Panc1 (cell line): ENCODE measurements at regions of chr2 and their contacts with region 1.

Region 1: GRCh38 chr2:234368861-234369261 is 128.0 kb downstream of the ARL4C start:
- DNase-seq: peak; percentile 77
- ATAC-seq: peak; percentile 97
- H3K4me3 ChIP-seq: no peak overlapping the region
- H3K27ac ChIP-seq: peak overlapping the region; percentile 100
- H3K4me1 ChIP-seq: peaks cover 87% of the 10 kb centered on the region
- H3K27me3 ChIP-seq: no peaks in the 10 kb centered on the region
- CTCF ChIP-seq: no peak

Region 2: GRCh38 chr2:234288974-234289455 is 79.8 kb before region 1 on chr2:
- CTCF ChIA-PET with region 1: no interaction called
- POLR2A ChIA-PET with region 1: no interaction called
- in situ Hi-C with region 1: no loop called
- intact Hi-C with region 1: loop called (anchors 10 kb)
- DNase-seq: no peak
- ATAC-seq: peak; percentile 54; the same call in 1 of the 2 replicates
- H3K4me3 ChIP-seq: no peak overlapping the region
- H3K27ac ChIP-seq: peak overlapping the region; percentile 85
- H3K4me1 ChIP-seq: peaks cover 12% of the 10 kb centered on the region
- H3K27me3 ChIP-seq: no peaks in the 10 kb centered on the region
- CTCF ChIP-seq: peak; percentile 88

Region 3: GRCh38 chr2:234494361-234495250 is 125.7 kb after region 1 on chr2:
- CTCF ChIA-PET with region 1: no interaction called
- POLR2A ChIA-PET with region 1: interaction called, 6 read pairs
- in situ Hi-C with region 1: no loop called
- intact Hi-C with region 1: loop called (anchors 5 kb)
- DNase-seq: no peak
- ATAC-seq: no peak
- H3K4me3 ChIP-seq: peak overlapping the region; percentile 72 to 97
- H3K27ac ChIP-seq: peak overlapping the region; percentile 91
- H3K4me1 ChIP-seq: peaks cover 38% of the 10 kb centered on the region
- H3K27me3 ChIP-seq: no peaks in the 10 kb centered on the region
- CTCF ChIP-seq: no peak